PC-3 (cell line): ENCODE measurements at regions of chr3 and their contacts with region 1.

Region 1: DNA sequence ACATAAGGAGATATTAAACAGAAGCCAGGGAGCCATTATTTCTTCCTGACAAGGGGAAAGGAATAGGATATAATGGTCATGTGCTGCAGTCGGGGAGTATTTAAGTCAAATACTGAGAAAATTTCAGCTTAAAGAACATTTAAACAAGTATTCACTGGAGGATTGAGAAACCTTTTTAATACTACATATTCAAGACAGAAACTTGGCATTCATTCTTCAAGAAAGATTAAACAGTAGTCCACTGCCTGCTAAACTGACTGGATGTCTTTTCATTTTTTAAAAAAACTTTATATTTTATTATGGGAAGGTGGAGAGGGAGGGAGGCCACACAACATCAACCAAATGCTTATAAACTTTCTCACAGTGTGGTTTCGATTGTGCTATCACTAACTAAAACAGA is 107.4 kb upstream of the CBLB start:
- DNase-seq: no peak
- ATAC-seq: no peak
- H3K4me3 ChIP-seq: no peak overlapping the region
- H3K27ac ChIP-seq: no peak overlapping the region
- H3K4me1 ChIP-seq: no peaks in the 10 kb centered on the region
- H3K27me3 ChIP-seq: no peaks in the 10 kb centered on the region
- CTCF ChIP-seq: no peak

Region 2: GRCh38 chr3:105806361-105806760 is 169.8 kb before region 1 on chr3:
- CTCF ChIA-PET with region 1: no interaction called
- POLR2A ChIA-PET with region 1: no interaction called
- intact Hi-C with region 1: no loop called
- DNase-seq: peak; percentile 89
- ATAC-seq: peak; percentile 65
- H3K4me3 ChIP-seq: no peak overlapping the region
- H3K27ac ChIP-seq: peak overlapping the region; percentile 3; the same call in 1 of the 2 replicates
- H3K4me1 ChIP-seq: peaks cover 48% of the 10 kb centered on the region
- H3K27me3 ChIP-seq: no peaks in the 10 kb centered on the region
- CTCF ChIP-seq: no peak

Region 3: DNA sequence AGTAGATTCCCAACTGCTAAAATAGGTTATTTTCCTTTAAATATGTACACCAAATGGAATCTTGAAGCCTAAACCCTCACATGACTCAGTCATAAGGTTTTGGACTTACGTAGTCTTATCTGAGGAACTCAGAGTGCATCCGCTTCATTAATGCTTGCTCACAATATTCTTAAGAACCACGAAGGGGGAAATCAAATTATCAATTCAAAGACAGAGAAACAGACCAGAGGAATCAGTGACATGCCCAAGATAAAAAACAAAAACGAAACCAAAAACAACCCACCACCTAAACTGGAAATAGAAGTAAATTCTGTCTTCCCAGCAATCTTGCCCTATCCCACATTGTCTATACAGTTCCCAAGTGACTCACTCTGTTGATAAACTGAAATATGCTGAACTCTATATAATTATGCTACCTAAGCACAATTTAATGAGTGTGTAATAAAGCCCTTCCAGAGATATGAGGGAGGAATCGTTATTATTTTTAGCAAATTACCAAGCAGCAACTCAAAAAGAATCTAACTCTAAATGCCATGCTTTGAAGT is 28.0 kb after region 1 on chr3:
- CTCF ChIA-PET with region 1: no interaction called
- POLR2A ChIA-PET with region 1: no interaction called
- intact Hi-C with region 1: loop called (anchors 2 kb)
- DNase-seq: peak; percentile 41
- ATAC-seq: peak; percentile 51; the same call in 1 of the 2 replicates
- H3K4me3 ChIP-seq: peak overlapping the region; percentile 37; the same call in 1 of the 2 replicates
- H3K27ac ChIP-seq: peak overlapping the region; percentile 11
- H3K4me1 ChIP-seq: peaks cover 25% of the 10 kb centered on the region; the same call in 1 of the 2 replicates
- H3K27me3 ChIP-seq: no peaks in the 10 kb centered on the region
- CTCF ChIP-seq: no peak